ENCODE measurements at regions of chr10 and their contacts with region 1.

Region 1: GRCh38 chr10:30783939-30784500 is 154.5 kb upstream of the LYZL2 start:
- DNase-seq: peak; percentile 65 to 89 (median 84)
- ATAC-seq: peak; percentile 96
- H3K4me3 ChIP-seq: peak overlapping the region; percentile 64
- H3K4me3 Mint-ChIP-seq: peak overlapping the region; percentile 80 to 92 (median 88)
- H3K27ac ChIP-seq: peak overlapping the region; percentile 64
- H3K27ac Mint-ChIP-seq: peak overlapping the region; percentile 69 to 96 (median 81)
- H3K4me1 ChIP-seq: peaks cover 0 to 16% of the 10 kb centered on the region in 2 donors
- H3K4me1 Mint-ChIP-seq: peaks cover 5 to 30% (median 25%) of the 10 kb centered on the region in 7 donors
- H3K27me3 ChIP-seq: no peaks in the 10 kb centered on the region
- H3K27me3 Mint-ChIP-seq: peaks cover 0 to 2% (median 0%) of the 10 kb centered on the region in 5 donors

Region 2: GRCh38 chr10:30722956-30723620 is 60.9 kb before region 1 on chr10:
- CTCF ChIA-PET with region 1: no interaction called
- POLR2A ChIA-PET with region 1: no interaction called
- intact Hi-C with region 1: loop called (anchors 1 to 2 kb)
- DNase-seq: no peak
- ATAC-seq: no peak
- H3K4me3 ChIP-seq: no peak overlapping the region
- H3K4me3 Mint-ChIP-seq: no peak overlapping the region
- H3K27ac ChIP-seq: no peak overlapping the region
- H3K27ac Mint-ChIP-seq: no peak overlapping the region
- H3K4me1 ChIP-seq: no peaks in the 10 kb centered on the region
- H3K4me1 Mint-ChIP-seq: peaks cover 0 to 10% (median 0%) of the 10 kb centered on the region in 7 donors
- H3K27me3 ChIP-seq: no peaks in the 10 kb centered on the region
- H3K27me3 Mint-ChIP-seq: peaks cover 0 to 4% (median 0%) of the 10 kb centered on the region in 5 donors

Region 3: DNA sequence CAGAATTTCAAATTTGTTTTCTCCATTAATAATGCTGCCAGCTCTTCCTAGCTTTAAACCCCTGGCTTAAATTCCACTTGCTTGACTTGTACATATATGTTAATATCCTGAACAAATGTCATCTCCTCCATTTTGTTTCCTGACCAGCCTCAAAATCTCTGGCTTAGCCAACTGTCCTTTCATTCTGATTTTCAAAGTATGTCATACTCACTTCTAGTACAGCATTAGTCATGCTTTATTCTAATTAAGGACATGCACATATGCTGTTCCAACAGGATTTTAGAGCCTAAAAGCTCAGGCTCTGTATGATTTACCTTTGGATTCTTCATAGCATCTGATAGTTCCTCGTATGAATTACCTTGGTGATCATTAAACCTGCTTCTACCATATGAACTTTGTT is 89.4 kb after region 1 on chr10:
- CTCF ChIA-PET with region 1: interaction called, 4 read pairs
- POLR2A ChIA-PET with region 1: no interaction called
- intact Hi-C with region 1: loop called in 1 of 2 experiments (anchors 1 kb)
- DNase-seq: no peak
- ATAC-seq: no peak
- H3K4me3 ChIP-seq: no peak overlapping the region
- H3K4me3 Mint-ChIP-seq: no peak overlapping the region
- H3K27ac ChIP-seq: no peak overlapping the region
- H3K27ac Mint-ChIP-seq: no peak overlapping the region
- H3K4me1 ChIP-seq: no peaks in the 10 kb centered on the region
- H3K4me1 Mint-ChIP-seq: no peaks in the 10 kb centered on the region
- H3K27me3 ChIP-seq: no peaks in the 10 kb centered on the region
- H3K27me3 Mint-ChIP-seq: no peaks in the 10 kb centered on the region

Region 4: DNA sequence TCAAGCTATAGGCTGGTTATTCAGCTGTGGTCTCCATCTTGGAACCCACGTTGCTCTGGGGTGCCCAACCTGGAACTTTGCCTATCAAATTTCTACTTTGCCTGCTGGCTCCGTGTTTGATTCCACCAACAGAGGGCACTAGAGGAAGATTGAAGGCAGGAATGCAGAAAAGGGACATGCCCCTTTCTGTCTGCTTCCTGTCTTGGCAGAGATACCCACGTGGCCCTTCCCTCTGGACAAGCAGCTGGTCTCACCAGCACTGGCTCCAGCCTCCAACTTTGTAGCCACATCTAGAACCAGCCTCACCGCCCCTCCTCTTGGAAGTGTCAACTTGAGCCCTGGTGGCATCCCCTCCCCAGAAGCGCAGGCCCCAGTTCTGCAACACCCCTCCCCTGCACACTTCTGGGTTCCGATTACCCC is 299.8 kb after region 1 on chr10:
- CTCF ChIA-PET with region 1: interaction called, 3 read pairs
- POLR2A ChIA-PET with region 1: no interaction called
- intact Hi-C with region 1: loop called (anchors 1 to 2 kb)
- DNase-seq: peak; percentile 14 to 67 (median 56)
- ATAC-seq: peak; percentile 66
- H3K4me3 ChIP-seq: no peak overlapping the region
- H3K4me3 Mint-ChIP-seq: no peak overlapping the region
- H3K27ac ChIP-seq: no peak overlapping the region
- H3K27ac Mint-ChIP-seq: no peak overlapping the region
- H3K4me1 ChIP-seq: no peaks in the 10 kb centered on the region
- H3K4me1 Mint-ChIP-seq: peaks cover 0 to 12% (median 3%) of the 10 kb centered on the region in 7 donors
- H3K27me3 ChIP-seq: no peaks in the 10 kb centered on the region
- H3K27me3 Mint-ChIP-seq: peaks cover 0 to 5% (median 0%) of the 10 kb centered on the region in 5 donors

Region 5: GRCh38 chr10:31490858-31491504 is 707.0 kb after region 1 on chr10:
- CTCF ChIA-PET with region 1: interaction called, 6 read pairs
- POLR2A ChIA-PET with region 1: interaction called, 3 read pairs
- intact Hi-C with region 1: loop called (anchors 1 kb)
- DNase-seq: peak in 6 of 9 donors; percentile 30 to 50 (median 36)
- ATAC-seq: peak; percentile 72
- H3K4me3 ChIP-seq: no peak overlapping the region
- H3K4me3 Mint-ChIP-seq: no peak overlapping the region
- H3K27ac ChIP-seq: no peak overlapping the region
- H3K27ac Mint-ChIP-seq: peak overlapping the region in 1 of 9 donors; percentile 1
- H3K4me1 ChIP-seq: no peaks in the 10 kb centered on the region
- H3K4me1 Mint-ChIP-seq: peaks cover 0 to 12% (median 0%) of the 10 kb centered on the region in 7 donors
- H3K27me3 ChIP-seq: no peaks in the 10 kb centered on the region
- H3K27me3 Mint-ChIP-seq: no peaks in the 10 kb centered on the region

Region 6: DNA sequence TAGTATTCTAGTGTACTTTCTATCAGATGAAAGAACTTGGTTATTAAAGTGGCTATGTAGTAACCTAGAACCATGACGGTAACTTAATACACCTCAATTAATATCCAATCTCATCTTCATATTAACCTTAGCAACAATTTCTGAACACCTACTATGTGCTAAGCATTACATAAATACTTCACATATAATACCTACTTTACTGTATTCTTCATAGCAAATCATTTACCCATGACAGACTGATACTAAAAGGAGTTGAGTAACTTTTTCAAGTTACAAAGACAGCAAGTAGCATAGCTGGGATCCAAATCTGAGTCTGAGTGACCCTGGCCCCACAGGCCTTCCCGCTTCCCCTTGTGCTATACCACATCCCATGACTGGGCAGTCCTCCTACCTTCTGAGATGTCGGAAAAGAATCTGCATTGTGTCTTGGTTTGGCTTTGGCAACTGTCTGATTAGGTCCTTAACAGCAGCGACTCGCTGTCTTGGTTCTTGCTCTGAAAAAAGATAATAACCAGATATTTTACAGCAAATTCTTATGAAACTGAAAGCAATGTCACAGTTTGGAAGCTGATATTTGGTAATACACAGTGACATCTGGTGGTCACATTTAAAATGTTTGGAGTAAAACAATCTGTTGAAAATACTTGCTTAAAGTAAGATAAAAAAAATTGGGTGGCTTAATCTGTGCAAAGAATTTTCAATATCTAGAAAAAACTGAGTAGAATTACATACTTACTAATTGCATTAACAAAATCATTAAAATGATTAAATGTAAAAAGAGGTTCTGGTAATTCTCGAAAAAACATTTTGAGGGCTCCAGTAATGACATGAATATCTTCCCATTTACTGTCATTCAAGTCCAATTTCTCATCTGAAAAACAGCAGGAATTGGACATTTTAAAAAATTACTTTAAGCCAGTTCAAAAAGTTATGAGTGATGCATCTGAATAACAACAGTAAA is 1024.5 kb after region 1 on chr10:
- CTCF ChIA-PET with region 1: interaction called, 4 read pairs
- POLR2A ChIA-PET with region 1: interaction called, 4 read pairs
- intact Hi-C with region 1: loop called (anchors 1 kb)
- DNase-seq: peak in 8 of 9 donors; percentile 21 to 62 (median 48)
- ATAC-seq: peak; percentile 77
- H3K4me3 ChIP-seq: no peak overlapping the region
- H3K4me3 Mint-ChIP-seq: peak overlapping the region in 3 of 10 donors; percentile 51 to 78 (median 56)
- H3K27ac ChIP-seq: no peak overlapping the region
- H3K27ac Mint-ChIP-seq: peak overlapping the region in 8 of 9 donors; percentile 17 to 94 (median 71)
- H3K4me1 ChIP-seq: no peaks in the 10 kb centered on the region
- H3K4me1 Mint-ChIP-seq: peaks cover 2 to 11% (median 6%) of the 10 kb centered on the region in 7 donors
- H3K27me3 ChIP-seq: no peaks in the 10 kb centered on the region
- H3K27me3 Mint-ChIP-seq: no peaks in the 10 kb centered on the region